OCI-LY7 (cell line): ENCODE measurements at regions of chr9 and their contacts with region 1.

Region 1: DNA sequence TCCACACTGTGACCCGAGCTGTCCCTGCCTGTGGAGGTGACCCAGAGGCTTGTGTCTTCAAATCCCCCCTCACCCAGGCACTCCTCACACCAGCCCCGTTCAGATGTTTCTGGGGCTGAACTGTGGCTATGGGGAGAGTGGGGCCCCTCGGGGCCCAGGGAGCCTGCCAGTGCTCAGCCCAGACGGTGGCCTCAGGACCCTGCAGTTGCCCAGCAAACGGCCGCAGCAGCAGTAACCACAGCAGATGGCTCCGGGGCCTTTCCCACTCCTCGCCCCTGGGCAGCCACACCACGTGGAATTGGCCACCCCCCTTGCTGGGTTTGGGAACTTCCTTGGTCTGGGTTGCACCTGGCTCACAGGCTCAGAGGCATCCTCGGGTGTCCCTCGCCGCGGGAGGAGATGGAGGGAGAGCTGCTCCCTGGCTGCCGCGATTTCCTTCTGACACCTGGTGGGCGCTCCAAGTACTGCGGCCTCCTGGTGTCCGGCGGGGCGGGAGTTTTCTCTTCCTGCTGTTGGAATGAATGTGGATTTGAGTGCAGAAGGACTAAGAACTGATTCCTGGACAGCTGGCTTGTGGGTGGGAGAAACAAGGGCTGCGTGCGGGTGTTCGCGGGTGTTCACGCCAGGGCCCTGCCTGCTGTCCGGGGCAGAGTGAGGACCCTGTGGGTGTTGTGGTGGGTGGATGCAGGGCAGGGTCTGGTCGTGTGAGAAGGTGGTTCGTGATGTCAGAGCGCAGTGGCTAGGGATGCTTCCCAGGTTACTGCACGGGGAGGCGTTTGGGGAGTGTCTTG is 97.5 kb downstream of the COL5A1 start:
- DNase-seq: peak; percentile 23
- H3K4me3 ChIP-seq: no peak overlapping the region
- H3K27ac ChIP-seq: no peak overlapping the region
- H3K4me1 ChIP-seq: no peaks in the 10 kb centered on the region
- CTCF ChIP-seq: peak; percentile 82

Region 2: GRCh38 chr9:134698587-134699342 is 40.3 kb before region 1 on chr9:
- CTCF ChIA-PET with region 1: no interaction called
- POLR2A ChIA-PET with region 1: no interaction called
- intact Hi-C with region 1: loop called (anchors 5 kb)
- DNase-seq: peak; percentile 60
- H3K4me3 ChIP-seq: no peak overlapping the region
- H3K27ac ChIP-seq: no peak overlapping the region
- H3K4me1 ChIP-seq: no peaks in the 10 kb centered on the region
- CTCF ChIP-seq: peak; percentile 89

Region 3: DNA sequence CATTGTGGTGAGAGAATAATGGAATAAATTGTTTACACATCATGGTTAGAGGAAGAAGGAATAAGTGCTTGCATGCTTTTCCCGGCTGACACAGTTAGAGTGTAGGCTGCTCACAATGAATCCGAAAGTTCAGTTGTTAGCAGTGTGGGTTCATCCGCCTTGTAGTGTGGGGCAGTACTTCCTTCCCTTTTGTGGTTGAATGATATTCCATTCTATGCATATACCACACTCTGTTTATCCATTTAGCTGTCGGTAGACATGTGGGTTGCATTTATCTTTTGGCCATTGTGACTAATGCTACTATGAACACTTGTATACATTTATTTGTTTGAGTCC is 13.5 kb before region 1 on chr9:
- CTCF ChIA-PET with region 1: no interaction called
- POLR2A ChIA-PET with region 1: no interaction called
- intact Hi-C with region 1: no loop called
- DNase-seq: no peak
- H3K4me3 ChIP-seq: no peak overlapping the region
- H3K27ac ChIP-seq: no peak overlapping the region
- H3K4me1 ChIP-seq: no peaks in the 10 kb centered on the region
- CTCF ChIP-seq: no peak

Region 4: DNA sequence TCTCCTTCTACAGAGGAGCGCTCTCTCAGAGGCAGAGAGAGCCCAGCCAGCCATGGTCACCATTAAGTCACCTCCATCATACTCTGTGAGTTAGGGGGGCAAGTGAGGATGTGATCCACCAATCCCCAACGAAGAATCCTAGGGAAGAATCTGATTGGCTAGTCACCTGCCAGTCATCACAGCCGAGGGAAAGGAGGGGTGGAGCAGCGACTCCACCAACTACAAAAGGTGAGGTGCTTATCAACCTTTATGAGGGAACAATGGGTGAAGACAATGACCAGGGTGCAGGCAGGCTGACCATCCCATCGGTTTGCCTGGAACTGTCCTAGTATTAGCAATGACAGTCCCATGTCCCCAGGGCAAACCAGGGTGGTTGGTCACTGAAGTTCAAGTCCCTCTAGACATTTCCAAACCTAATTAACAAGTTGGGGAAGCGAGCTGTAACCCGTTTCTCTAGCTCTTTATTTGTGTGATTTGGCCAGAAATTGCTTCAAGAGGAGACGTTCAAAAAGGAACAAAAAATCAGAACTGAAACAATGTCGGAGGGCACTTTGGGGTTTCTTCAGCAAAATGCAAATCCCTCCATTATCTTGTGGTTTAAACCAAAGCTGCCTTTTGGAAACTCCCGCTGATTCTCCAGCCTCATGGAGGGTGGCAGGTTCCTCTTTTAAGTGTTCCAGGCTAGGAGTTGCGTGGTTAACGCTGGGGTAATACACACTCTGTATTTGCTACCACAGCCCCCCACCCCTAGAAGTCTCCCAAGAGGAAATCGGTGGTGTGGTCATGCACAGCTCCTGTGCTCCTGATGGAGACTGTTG is 197.5 kb after region 1 on chr9:
- CTCF ChIA-PET with region 1: no interaction called
- POLR2A ChIA-PET with region 1: no interaction called
- intact Hi-C with region 1: no loop called
- DNase-seq: peak; percentile 85
- H3K4me3 ChIP-seq: peak overlapping the region; percentile 40
- H3K27ac ChIP-seq: peak overlapping the region; percentile 97
- H3K4me1 ChIP-seq: peaks cover 79% of the 10 kb centered on the region
- CTCF ChIP-seq: no peak

Region 5: GRCh38 chr9:135144581-135145108 is 405.6 kb after region 1 on chr9:
- CTCF ChIA-PET with region 1: no interaction called
- POLR2A ChIA-PET with region 1: no interaction called
- intact Hi-C with region 1: no loop called
- DNase-seq: no peak
- H3K4me3 ChIP-seq: no peak overlapping the region
- H3K27ac ChIP-seq: no peak overlapping the region
- H3K4me1 ChIP-seq: no peaks in the 10 kb centered on the region
- CTCF ChIP-seq: no peak